ENCODE measurements at regions of chr4 and their contacts with region 1.

Region 1: GRCh38 chr4:100082852-100083251 is 107.4 kb downstream of the DDIT4L start:
- DNase-seq: no peak
- ATAC-seq: no peak
- H3K4me3 Mint-ChIP-seq: no peak overlapping the region
- H3K27ac Mint-ChIP-seq: no peak overlapping the region
- H3K4me1 Mint-ChIP-seq: no peaks in the 10 kb centered on the region
- H3K27me3 Mint-ChIP-seq: no peaks in the 10 kb centered on the region

Region 2: DNA sequence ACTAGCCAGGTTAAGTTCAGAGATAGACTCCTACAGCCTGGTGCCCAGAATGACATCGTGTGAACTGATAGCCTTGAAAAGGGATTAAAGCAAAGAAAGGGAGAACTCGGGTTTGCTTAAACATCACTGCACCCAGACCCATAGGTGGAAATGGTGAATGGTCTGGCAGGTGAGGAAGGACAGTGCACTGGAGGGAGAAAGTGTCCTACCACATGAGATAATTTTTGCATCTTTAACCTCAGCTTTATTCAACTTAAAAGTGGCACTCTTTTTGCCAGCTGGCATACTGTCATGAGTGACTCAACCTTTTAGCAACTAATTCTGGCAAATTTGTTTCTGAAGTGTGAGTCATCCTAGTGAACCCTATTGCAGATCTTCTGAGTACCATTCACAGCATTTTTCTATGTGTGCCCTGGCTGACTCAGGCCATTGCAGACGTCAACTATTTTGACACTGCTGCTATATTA is 319.2 kb before region 1 on chr4:
- CTCF ChIA-PET with region 1: no interaction called
- POLR2A ChIA-PET with region 1: no interaction called
- DNase-seq: no peak
- ATAC-seq: no peak
- H3K4me3 Mint-ChIP-seq: no peak overlapping the region
- H3K27ac Mint-ChIP-seq: no peak overlapping the region
- H3K4me1 Mint-ChIP-seq: no peaks in the 10 kb centered on the region
- H3K27me3 Mint-ChIP-seq: peaks cover 4% of the 10 kb centered on the region

Region 3: GRCh38 chr4:99950913-99951254 is 132.0 kb before region 1 on chr4:
- CTCF ChIA-PET with region 1: no interaction called
- POLR2A ChIA-PET with region 1: no interaction called
- DNase-seq: no peak
- ATAC-seq: no peak
- H3K4me3 Mint-ChIP-seq: no peak overlapping the region
- H3K27ac Mint-ChIP-seq: no peak overlapping the region
- H3K4me1 Mint-ChIP-seq: peaks cover 23% of the 10 kb centered on the region
- H3K27me3 Mint-ChIP-seq: no peaks in the 10 kb centered on the region

Region 4: DNA sequence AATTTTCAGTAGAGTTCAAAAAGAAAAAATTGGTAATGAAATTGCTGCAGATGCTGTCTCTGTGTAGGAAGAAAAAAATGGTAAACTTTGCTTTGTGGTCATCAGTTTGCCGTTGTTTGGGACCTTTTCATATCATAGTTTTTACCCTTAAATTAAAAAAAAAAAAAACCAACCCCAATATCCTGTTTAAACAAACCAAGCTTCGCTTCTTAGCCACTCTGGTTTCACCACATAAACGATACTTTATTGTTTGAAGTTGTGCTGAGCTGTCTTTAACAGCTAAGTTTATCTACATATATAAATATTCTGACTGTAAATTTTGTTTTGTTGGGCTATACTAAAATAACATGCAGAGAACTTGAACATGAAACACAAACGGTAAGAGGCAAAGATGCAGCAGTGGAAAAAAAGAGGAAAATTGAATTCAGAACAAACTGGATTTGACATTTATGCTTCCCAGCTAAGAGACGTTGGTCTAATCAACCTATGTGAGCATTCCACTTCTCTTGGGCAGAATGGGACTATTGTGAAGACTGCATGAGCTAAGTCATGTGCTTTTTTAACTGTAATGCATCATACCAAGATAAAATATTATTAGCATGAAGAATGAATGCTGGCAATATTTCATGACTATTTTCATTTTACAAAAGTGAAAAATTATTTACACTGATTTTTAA is 117.0 kb before region 1 on chr4:
- CTCF ChIA-PET with region 1: no interaction called
- POLR2A ChIA-PET with region 1: interaction called, 10 read pairs
- DNase-seq: no peak
- ATAC-seq: peak; percentile 69
- H3K4me3 Mint-ChIP-seq: peak overlapping the region; percentile 42
- H3K27ac Mint-ChIP-seq: peak overlapping the region; percentile 42
- H3K4me1 Mint-ChIP-seq: peaks cover 22% of the 10 kb centered on the region
- H3K27me3 Mint-ChIP-seq: peaks cover 6% of the 10 kb centered on the region

Region 5: DNA sequence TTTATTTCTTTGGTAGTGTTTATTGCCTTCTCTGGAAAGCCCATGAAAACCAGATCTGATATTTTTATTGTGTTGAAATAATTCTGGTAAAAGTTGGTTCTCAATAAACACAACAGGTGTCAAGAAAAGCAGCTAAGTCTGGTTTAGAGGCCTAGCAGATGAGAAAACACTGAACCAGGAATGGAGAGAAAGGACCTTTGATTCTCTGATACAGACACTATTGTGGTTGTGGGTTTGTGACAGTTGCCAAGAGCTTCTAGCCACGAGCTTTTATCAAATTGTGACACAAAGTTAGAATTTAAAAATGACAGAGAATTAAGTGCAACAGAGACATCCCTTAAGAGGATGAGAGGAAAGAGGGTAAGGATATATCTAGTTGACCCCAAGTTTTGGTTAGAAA is 64.8 kb after region 1 on chr4:
- CTCF ChIA-PET with region 1: no interaction called
- POLR2A ChIA-PET with region 1: no interaction called
- DNase-seq: no peak
- ATAC-seq: no peak
- H3K4me3 Mint-ChIP-seq: no peak overlapping the region
- H3K27ac Mint-ChIP-seq: no peak overlapping the region
- H3K4me1 Mint-ChIP-seq: peaks cover 8% of the 10 kb centered on the region
- H3K27me3 Mint-ChIP-seq: no peaks in the 10 kb centered on the region

Region 6: DNA sequence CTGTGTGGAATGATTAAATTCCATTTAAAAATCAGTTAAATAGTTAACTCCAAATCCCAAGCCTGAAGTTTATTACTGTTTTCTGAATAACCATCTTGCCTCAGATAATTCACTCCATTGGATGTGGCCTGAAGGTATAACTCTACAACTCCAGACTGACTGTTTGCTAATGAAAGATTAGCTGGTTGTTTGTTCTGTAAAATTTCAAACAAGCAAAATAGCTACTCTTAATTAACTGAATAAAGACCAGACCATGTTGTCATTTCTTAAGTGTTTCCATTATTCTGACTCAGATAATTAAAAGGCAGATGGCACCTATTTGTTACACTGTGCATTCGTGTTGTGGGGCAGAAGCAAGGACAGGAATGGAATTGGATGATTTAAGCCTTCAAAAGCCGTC is 185.9 kb after region 1 on chr4:
- CTCF ChIA-PET with region 1: no interaction called
- POLR2A ChIA-PET with region 1: no interaction called
- DNase-seq: no peak
- ATAC-seq: no peak
- H3K4me3 Mint-ChIP-seq: no peak overlapping the region
- H3K27ac Mint-ChIP-seq: no peak overlapping the region
- H3K4me1 Mint-ChIP-seq: no peaks in the 10 kb centered on the region
- H3K27me3 Mint-ChIP-seq: peaks cover 5% of the 10 kb centered on the region